Calu3 (cell line): ENCODE measurements at regions of chr3 and their contacts with region 1.

Region 1: DNA sequence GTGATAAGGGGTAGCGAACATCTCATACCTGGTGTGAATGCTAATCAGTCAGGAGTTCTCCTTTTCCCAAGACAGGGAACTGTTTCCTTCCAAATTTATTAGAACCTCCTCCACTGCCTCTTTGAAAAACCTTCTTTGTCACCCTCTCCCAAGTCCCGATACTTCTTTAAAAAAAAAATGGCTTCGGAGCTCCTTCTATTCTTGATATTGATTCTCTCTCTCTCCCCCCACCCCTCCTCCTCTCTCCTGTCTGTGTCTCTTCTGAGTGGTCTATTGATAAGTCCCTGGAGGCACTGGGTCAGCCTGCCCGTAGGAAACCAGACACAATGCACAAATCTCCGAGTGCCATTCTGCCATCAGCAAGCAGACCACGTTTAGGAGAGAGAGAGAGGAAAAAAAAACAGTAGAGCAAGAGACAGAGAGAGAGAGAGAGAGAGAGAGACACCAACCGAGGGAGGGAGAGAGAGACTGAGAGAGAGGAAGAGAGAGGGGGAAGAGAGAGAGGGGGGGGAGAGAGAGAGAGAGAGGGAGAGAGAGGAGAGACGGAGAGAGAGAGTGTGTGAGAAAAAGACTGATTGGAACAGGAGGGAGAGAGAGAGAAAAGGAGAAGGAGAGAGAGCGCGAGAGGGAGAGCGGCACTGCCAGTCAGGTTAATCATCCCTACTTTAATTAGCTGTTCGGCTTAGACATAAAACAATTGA is 160.9 kb downstream of the TIGIT start:
- DNase-seq: no peak
- H3K4me3 Mint-ChIP-seq: no peak overlapping the region
- H3K27ac Mint-ChIP-seq: no peak overlapping the region
- H3K4me1 Mint-ChIP-seq: peaks cover 24% of the 10 kb centered on the region
- H3K27me3 Mint-ChIP-seq: no peaks in the 10 kb centered on the region
- CTCF ChIP-seq: no peak

Region 2: GRCh38 chr3:114207768-114208167 is 246.9 kb before region 1 on chr3:
- CTCF ChIA-PET with region 1: no interaction called
- intact Hi-C with region 1: no loop called
- DNase-seq: no peak
- H3K4me3 Mint-ChIP-seq: no peak overlapping the region
- H3K27ac Mint-ChIP-seq: no peak overlapping the region
- H3K4me1 Mint-ChIP-seq: no peaks in the 10 kb centered on the region
- H3K27me3 Mint-ChIP-seq: peaks cover 48% of the 10 kb centered on the region
- CTCF ChIP-seq: no peak

Region 3: GRCh38 chr3:114498779-114499370 is 44.2 kb after region 1 on chr3:
- CTCF ChIA-PET with region 1: interaction called, 11 read pairs
- intact Hi-C with region 1: no loop called
- DNase-seq: peak; percentile 76
- H3K4me3 Mint-ChIP-seq: no peak overlapping the region
- H3K27ac Mint-ChIP-seq: peak overlapping the region; percentile 55
- H3K4me1 Mint-ChIP-seq: peaks cover 40% of the 10 kb centered on the region
- H3K27me3 Mint-ChIP-seq: no peaks in the 10 kb centered on the region
- CTCF ChIP-seq: no peak